PC-9 (cell line): ENCODE measurements at regions of chr12 and their contacts with region 1.

Region 1: GRCh38 chr12:131737142-131737827 is 26.4 kb downstream of the SFSWAP start:
- DNase-seq: peak; percentile 89 to 98
- H3K4me3 ChIP-seq: peak overlapping the region; percentile 50
- H3K27ac ChIP-seq: peak overlapping the region; percentile 80
- H3K4me1 ChIP-seq: peaks cover 23% of the 10 kb centered on the region
- H3K27me3 ChIP-seq: no peaks in the 10 kb centered on the region
- CTCF ChIP-seq: no peak

Region 2: GRCh38 chr12:131390384-131391334 is 346.6 kb before region 1 on chr12:
- CTCF ChIA-PET with region 1: no interaction called
- POLR2A ChIA-PET with region 1: no interaction called
- intact Hi-C with region 1: no loop called
- DNase-seq: peak in 1 of 2 experiments; percentile 38
- H3K4me3 ChIP-seq: no peak overlapping the region
- H3K27ac ChIP-seq: no peak overlapping the region
- H3K4me1 ChIP-seq: no peaks in the 10 kb centered on the region
- H3K27me3 ChIP-seq: peaks cover 59% of the 10 kb centered on the region
- CTCF ChIP-seq: no peak

Region 3: DNA sequence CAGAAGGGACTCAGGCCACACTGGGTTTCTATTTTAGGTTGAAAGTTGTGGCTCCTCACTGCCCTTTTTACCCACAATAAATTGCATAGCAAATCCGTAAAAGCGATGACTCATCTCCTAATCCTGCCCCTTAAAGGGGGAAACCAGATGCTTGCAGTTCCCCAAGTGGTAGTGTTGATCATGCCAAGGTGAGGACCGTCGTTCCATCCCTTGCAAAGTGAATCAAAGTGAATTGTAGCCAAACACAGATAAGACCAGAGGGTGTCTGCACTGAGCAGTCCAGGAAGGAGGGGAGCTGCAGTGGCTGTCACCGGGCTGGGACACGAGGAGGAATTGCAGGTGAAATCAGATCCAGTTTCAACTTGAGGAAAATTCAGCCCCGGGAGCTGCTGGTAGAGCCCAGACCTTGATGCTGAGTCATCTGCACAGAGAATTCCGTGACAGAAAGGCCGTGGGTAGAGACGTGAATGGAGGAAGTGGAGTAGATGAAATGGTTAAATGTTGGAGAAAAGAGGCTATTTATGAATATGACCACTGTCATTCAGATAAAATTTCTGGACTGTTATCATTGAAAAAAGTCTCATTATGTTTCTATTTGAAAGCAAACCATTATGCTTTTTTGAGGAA is 46.7 kb after region 1 on chr12:
- CTCF ChIA-PET with region 1: no interaction called
- POLR2A ChIA-PET with region 1: no interaction called
- intact Hi-C with region 1: loop called (anchors 2 kb)
- DNase-seq: peak; percentile 71 to 84
- H3K4me3 ChIP-seq: peak overlapping the region; percentile 44; the same call in 1 of the 2 replicates
- H3K27ac ChIP-seq: peak overlapping the region; percentile 80
- H3K4me1 ChIP-seq: peaks cover 30% of the 10 kb centered on the region
- H3K27me3 ChIP-seq: no peaks in the 10 kb centered on the region
- CTCF ChIP-seq: no peak